ENCODE measurements at regions of chr17 and their contacts with region 1.

Region 1: DNA sequence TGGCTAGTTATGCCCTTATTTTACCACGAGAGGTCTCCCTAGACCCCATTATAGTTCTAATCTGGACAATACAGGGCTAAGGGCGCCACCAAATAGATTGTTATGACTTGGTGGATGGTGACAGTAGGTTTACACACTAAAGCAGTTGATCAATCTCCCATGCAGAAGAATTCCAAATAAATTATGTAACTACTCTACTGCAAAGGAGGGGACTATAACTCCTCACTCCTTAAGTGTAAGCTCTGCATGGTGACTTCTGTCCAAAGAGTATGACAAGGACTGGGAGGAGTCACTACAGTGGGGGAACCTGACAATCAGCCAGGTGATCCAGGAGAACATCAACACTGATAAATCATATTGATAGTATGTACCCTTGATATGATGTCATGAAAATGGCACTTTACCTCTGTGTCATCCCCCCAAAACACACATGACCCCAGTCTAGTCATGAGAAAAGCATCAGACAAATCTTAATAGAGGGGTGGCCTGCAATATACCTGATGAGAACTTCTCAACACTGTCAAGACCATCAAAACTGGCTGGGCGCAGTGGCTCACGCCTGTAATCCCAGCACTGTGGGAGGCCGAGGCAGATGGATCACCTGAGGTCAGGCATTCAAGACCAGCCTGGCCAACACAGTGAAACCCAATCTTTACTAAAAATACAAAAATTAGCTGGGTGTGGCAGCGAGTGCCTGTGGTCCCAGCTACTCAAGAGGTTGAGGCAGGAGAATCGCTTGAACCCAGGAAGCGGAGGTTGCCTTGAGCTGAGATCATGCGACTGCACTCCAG is 20.1 kb upstream of the YPEL2 start:
- ATAC-seq: peak; percentile 88 to 98 (median 96)
- H3K4me3 ChIP-seq: no peak overlapping the region
- H3K27ac ChIP-seq: no peak overlapping the region
- H3K4me1 ChIP-seq: no peaks in the 10 kb centered on the region

Region 2: GRCh38 chr17:59220376-59221158 is 90.8 kb before region 1 on chr17 and contains the start of gene GDPD1:
- in situ Hi-C with region 1: no loop called
- ATAC-seq: peak; percentile 95 to 98 (median 96)
- H3K4me3 ChIP-seq: peak within 1 kb of the TSS; percentile 55 to 71 (median 65)
- H3K27ac ChIP-seq: peak within 1 kb of the TSS; percentile 82 to 89
- H3K4me1 ChIP-seq: peaks cover 3 to 11% of the 10 kb centered on the region in 2 donors
- total RNA-seq, gene GDPD1: 1.2 to 24.7 (median 21.3) TPM

Region 3: GRCh38 chr17:59435238-59435637 is 123.9 kb after region 1 on chr17:
- in situ Hi-C with region 1: loop called in 6 of 9 experiments (anchors 10 to 25 kb)
- ATAC-seq: peak in 6 of 8 experiments; percentile 21 to 91 (median 57)
- H3K4me3 ChIP-seq: no peak overlapping the region
- H3K27ac ChIP-seq: no peak overlapping the region
- H3K4me1 ChIP-seq: peaks cover 3 to 5% of the 10 kb centered on the region in 2 donors

Region 4: GRCh38 chr17:59440784-59441441 is 129.6 kb after region 1 on chr17:
- in situ Hi-C with region 1: loop called in 6 of 9 experiments (anchors 10 to 25 kb)
- ATAC-seq: peak; percentile 96 to 100 (median 98)
- H3K4me3 ChIP-seq: no peak overlapping the region
- H3K27ac ChIP-seq: no peak overlapping the region
- H3K4me1 ChIP-seq: no peaks in the 10 kb centered on the region

Region 5: DNA sequence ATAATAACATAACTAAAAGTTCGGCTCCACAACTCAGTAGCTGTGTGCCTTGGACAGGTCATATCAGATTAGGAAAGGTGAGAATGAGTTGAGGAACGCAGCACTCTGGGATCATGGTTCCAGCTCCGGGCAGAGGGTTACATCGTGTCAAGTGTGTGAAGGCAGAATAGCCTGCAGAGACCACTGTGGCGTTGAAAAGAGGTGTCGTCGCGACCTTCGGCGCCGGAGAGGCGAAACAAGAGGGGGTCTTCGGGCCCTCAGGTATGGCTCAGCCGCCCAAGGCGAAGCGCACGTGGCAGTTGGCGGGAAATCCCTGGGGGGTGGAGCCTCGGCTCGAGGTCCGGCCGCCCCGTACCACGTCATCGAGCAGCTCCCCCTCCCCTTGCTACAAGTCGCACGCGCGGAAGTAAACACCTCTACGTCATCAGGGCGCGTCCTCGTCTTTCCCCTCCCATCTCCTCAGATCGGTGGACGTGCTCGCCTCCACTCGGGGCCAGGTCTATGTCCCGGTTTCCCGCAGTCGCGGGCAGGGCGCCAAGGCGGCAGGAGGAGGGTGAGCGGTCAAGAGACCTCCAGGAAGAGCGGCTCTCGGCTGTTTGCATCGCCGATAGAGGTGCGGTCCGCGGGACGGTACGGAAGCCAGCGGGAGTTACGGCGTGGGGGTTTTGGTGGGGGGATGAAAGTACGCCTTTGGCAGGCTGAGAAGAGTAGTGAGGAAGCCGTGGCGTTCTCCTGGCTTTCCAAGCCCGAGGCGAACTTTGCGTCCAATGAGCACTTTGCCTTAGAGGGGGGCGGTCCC is 254.0 kb after region 1 on chr17 and contains the start of gene DHX40:
- in situ Hi-C with region 1: loop called in 2 of 9 experiments (anchors 25 kb)
- ATAC-seq: peak; percentile 84 to 96 (median 89)
- H3K4me3 ChIP-seq: peak within 1 kb of the TSS; percentile 84 to 97 (median 90)
- H3K27ac ChIP-seq: peak within 1 kb of the TSS; percentile 87 to 94
- H3K4me1 ChIP-seq: peaks cover 6 to 7% of the 10 kb centered on the region in 2 donors
- total RNA-seq, gene DHX40: 25.0 to 75.0 (median 47.9) TPM

Region 6: GRCh38 chr17:59669411-59669810 is 358.1 kb after region 1 on chr17:
- in situ Hi-C with region 1: no loop called
- ATAC-seq: no peak
- H3K4me3 ChIP-seq: no peak overlapping the region
- H3K27ac ChIP-seq: no peak overlapping the region
- H3K4me1 ChIP-seq: peaks cover 0 to 3% of the 10 kb centered on the region in 2 donors